Body of pancreas (tissue), 4 donors: ENCODE measurements at regions of chr2 and their contacts with region 1.

Region 1: GRCh38 chr2:73828818-73829570 is at the start of gene STAMBP:
- DNase-seq: peak; percentile 97 to 99 (median 98)
- ATAC-seq: peak; percentile 99
- H3K4me3 ChIP-seq: peak within 1 kb of the TSS; percentile 51 to 69
- H3K27ac ChIP-seq: peak within 1 kb of the TSS; percentile 77 to 89 (median 87)
- H3K4me1 ChIP-seq: peaks cover 27% of the 10 kb centered on the region
- H3K27me3 ChIP-seq: no peaks in the 10 kb centered on the region
- CTCF ChIP-seq: peak in 2 of 7 experiments; percentile 6 to 9
- POLR2A ChIP-seq: peak; percentile 11 to 80 (median 69)
- total RNA-seq, gene STAMBP: 9.2 to 10.4 TPM

Region 2: DNA sequence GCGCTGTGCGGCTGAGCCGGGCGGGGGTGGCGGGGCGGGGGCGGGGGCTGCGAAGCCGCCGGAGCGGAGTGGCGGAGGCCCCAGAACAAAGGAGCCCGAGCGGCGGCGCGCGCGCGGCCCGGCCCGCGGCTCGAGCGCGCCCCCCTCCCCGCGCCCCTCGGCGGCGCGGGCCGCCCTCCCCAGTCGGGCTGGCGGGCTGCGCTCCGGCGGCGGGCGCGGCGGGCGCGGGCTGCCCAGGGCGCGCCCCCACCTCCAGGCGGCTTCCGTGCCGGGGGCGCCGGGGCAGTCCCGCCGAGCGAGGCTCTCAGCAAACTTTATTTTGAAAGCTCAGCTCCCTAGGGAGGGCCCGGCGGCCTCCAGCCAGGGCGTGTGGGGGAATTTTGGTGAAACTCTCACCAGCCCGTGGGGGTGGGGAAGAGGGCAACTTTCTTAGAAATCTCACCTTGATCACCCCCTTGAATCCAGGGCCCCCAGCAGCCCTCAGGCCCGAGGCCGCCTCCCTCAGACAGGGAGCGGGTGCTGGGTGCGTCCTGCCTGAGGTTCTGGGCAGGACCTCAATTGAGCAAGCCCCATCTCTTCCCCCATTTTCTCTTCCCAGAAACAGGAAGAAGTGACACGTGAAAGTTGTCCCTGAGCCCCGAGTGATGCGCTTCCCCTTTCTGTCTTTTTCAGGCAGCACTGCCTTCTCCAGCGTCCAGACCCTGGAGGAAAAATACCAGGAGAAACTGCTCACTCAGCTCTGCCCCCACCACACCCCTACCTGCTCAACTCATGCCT is 156.5 kb after region 1 on chr2:
- intact Hi-C with region 1: loop called (anchors 10 kb)
- DNase-seq: peak in 3 of 4 donors; percentile 29 to 54 (median 34)
- ATAC-seq: peak; percentile 5
- H3K4me3 ChIP-seq: peak overlapping the region in 1 of 2 donors; percentile 11
- H3K27ac ChIP-seq: peak overlapping the region; percentile 63 to 99 (median 98)
- H3K4me1 ChIP-seq: peaks cover 69% of the 10 kb centered on the region
- H3K27me3 ChIP-seq: no peaks in the 10 kb centered on the region
- CTCF ChIP-seq: no peak
- POLR2A ChIP-seq: peak in 2 of 3 donors; percentile 26 to 52

Region 3: DNA sequence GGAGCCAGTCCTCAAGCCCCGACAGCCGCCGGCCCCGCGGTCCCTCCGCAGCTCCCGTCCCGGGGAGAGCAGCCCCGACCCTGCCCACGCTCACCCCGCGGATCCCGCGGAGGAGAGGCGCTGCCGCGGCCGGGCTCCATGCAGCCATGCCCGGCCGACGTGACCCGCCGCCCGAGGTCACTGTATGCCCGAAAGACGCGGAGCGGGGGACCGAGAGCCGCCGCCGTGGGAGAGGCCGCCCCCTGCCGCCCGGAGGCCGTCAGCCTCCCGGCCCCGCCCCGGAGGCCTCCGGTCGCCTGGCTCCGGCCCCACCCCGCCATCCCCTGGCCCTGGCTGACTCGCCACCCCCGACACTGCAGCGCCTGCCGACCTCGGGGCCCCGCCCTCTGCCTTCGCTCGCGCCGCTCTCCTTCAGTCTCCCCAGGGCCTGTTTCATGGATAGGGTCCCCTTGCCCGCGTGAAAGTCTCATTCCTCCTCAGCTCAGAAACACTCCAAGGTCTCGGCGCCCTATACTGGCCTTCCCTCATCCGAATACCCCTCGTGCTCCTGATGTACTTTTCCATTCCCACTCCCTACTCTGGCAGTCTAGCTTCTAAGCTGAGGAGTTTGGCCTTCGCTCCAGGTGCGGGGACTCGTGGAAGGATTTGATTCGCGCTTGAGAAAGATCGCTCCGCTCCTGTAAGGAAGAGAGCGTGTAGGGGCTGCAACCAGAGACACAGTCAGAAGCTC is 318.9 kb after region 1 on chr2 and contains the start of gene BOLA3:
- intact Hi-C with region 1: loop called (anchors 10 kb)
- DNase-seq: peak; percentile 88 to 93 (median 88)
- ATAC-seq: peak; percentile 98
- H3K4me3 ChIP-seq: peak within 1 kb of the TSS; percentile 24 to 88
- H3K27ac ChIP-seq: peak within 1 kb of the TSS; percentile 5 to 76 (median 56)
- H3K4me1 ChIP-seq: peaks cover 26% of the 10 kb centered on the region
- H3K27me3 ChIP-seq: no peaks in the 10 kb centered on the region
- CTCF ChIP-seq: peak; percentile 39 to 86 (median 70)
- POLR2A ChIP-seq: peak; percentile 32 to 59 (median 57)
- total RNA-seq, gene BOLA3: 17.1 to 41.5 TPM

Region 4: DNA sequence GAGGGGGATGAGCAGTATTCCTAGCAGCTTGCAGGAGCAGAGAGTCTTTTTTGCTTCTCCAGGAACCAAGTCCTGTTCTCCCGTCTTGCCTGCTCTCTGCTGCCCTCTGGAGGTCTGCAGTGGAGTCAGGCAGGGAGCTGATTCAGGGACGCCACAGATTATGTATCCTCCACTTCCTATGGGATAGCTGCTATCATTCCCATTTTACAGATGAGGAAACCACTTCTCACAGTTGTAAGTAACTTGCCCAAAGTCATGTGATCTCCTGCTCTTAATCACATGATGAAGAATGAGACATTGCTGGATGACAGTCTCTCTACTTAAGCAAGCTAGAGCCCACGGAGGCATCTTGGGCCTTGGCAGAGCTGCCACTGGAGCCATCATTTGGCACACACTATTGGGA is 505.9 kb after region 1 on chr2:
- intact Hi-C with region 1: loop called (anchors 10 kb)
- DNase-seq: peak; percentile 67 to 77 (median 75)
- ATAC-seq: peak; percentile 89
- H3K4me3 ChIP-seq: no peak overlapping the region
- H3K27ac ChIP-seq: no peak overlapping the region
- H3K4me1 ChIP-seq: no peaks in the 10 kb centered on the region
- H3K27me3 ChIP-seq: no peaks in the 10 kb centered on the region
- CTCF ChIP-seq: peak; percentile 73 to 94 (median 82)
- POLR2A ChIP-seq: no peak